Head of caudate nucleus (tissue), 42 donors: ENCODE measurements at regions of chr1 and their contacts with region 1.

Region 1: GRCh38 chr1:197521118-197521739 is 253.2 kb downstream of the CRB1 start:
- DNase-seq: peak in 9 of 42 donors; percentile 4 to 55 (median 9)

Region 2: DNA sequence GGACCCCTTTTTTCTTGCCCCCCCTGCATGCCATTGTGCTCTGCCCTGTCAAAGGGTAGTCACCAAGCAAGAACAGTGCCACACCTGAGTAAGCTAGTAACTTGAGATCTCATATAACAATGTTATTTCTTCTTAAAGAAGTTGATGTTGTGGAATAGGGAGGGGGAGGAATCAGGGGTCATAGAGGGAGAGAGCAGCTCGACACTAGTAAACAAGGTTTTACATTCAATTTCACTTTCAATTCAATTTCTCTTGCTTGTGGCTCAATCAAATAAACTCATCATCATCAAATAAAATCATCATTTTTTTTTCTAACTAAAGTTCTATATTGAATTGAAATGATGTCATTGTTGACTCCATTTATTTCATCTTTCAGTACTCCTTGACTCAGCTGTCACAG is 146.8 kb before region 1 on chr1:
- intact Hi-C with region 1: no loop called
- DNase-seq: no peak

Region 3: DNA sequence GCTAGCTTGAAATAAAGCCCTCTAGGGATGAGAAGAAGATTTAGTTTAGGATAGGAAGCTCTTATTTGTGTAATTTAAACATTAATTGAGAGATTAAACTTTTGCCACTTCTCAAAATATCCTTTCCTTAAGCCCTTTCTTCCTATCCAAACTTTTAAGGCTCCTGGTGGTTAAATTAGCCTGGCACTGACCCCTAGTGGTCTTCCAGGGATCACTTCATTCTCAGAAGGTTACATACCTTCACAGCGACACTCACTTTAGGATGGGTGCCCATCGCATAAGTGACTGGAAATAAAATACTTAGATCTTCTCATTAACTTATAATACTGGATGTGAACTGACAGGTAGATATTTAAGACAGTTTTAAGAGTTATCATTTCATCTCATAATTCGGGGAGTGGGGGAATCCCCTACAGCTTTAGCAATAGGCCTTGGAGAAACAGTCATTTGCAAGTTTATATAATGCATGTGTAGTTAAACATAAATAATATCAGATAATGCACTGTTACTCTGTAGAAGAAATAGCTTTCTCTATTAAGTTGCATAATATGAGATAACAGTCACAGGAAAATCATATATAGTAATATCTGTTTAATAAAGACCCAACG is 403.4 kb after region 1 on chr1:
- intact Hi-C with region 1: loop called (anchors 10 kb)
- DNase-seq: peak in 13 of 42 donors; percentile 17 to 60 (median 38)